Activated B cell treated with CpG ODN at 0.5 μM for 24 hours (primary cell): ENCODE measurements at regions of chr15 and their contacts with region 1.

Region 1: DNA sequence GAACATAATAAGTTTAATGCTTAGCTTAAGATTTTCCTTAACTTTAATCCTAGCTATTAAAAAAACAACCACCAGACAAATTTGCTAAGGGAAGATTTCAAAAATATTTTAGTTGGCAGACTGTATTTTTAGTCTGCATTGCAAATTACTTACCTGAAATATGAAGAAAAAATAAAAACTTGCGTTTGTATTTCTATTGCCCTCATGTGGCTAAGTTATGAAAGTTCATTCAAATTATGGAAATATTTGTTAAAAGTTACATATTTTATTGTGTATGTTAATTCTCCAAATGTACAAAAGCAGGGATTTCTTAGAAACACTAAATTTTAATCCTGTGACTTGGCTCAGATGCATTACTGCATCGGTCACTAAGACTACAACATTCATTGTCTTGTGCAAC is 15.0 kb downstream of the GTF2A2 start:
- DNase-seq: no peak
- ATAC-seq: no peak
- H3K4me3 Mint-ChIP-seq: no peak overlapping the region
- H3K27ac Mint-ChIP-seq: no peak overlapping the region
- H3K4me1 Mint-ChIP-seq: no peaks in the 10 kb centered on the region
- H3K27me3 Mint-ChIP-seq: no peaks in the 10 kb centered on the region
- CTCF ChIP-seq: no peak

Region 2: DNA sequence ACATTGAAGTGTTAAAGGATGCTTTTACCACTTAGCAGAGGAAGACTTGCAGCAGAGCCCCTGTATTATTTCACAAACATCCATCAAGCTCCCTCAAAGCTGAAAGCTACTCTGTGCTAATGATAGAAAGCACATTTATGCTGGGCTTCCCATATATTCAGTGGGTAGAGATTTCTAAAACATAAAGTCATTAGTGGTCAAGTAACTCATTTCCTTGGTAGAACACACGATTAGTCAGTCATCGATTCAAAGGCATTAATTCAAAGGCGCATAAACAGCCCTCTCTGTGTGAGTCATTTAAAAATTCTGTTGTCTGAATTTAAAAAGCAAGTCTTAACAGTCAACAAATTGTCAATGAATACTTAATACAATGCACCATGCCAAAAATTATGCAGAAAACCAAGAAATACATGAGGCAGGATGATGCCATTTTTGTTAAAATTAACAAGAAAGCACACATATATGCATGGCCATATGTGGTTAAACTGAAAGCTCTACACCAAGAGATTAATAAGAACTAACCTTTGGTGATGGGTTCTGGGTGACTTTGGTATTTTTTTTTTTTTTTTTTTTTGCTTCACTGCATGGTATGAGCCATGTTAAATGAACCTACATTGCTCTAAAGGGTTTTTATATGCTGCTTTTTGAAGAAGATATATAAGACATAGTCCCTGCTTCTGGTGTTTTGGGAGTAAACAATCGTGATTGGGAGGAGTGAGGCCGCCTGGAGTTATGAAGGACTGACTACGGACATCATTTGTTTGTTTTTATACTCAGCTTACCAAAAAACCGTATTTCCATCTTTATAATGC is 374.0 kb before region 1 on chr15:
- CTCF ChIA-PET with region 1: no interaction called
- POLR2A ChIA-PET with region 1: no interaction called
- intact Hi-C with region 1: loop called (anchors 5 kb)
- DNase-seq: no peak
- ATAC-seq: no peak
- H3K4me3 Mint-ChIP-seq: no peak overlapping the region
- H3K27ac Mint-ChIP-seq: no peak overlapping the region
- H3K4me1 Mint-ChIP-seq: peaks cover 26% of the 10 kb centered on the region
- H3K27me3 Mint-ChIP-seq: no peaks in the 10 kb centered on the region
- CTCF ChIP-seq: no peak

Region 3: DNA sequence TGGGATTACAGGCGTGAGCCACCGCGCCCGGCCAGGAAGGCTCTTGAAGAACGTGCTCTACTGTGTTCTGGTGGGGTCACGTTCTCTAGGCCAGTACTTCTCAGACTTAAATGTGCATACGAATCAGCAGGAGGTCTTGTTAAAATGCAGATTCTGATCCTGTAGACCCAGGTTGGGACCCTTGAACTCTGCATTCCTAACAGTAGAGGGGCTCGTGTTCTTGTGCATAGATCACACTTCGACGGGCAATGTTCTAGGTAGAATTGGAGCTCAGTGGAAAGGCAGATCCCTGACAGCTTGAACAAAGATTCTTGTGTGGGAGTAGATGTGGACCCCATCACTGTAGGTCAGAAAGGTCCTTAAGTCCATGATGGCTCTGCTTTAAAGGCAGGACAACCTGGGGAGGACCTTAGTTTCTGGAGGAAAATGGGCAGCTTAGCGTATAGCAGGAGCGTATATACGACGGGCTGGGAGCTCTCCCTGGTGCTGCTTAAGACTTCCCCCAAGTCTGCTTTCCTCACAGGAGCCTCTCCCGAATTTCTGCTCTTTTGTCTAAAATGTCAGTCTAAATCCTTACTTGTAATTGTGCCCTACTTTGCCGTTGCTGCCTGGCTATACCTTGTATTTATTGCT is 221.2 kb before region 1 on chr15:
- CTCF ChIA-PET with region 1: no interaction called
- POLR2A ChIA-PET with region 1: no interaction called
- intact Hi-C with region 1: no loop called
- DNase-seq: no peak
- ATAC-seq: no peak
- H3K4me3 Mint-ChIP-seq: no peak overlapping the region
- H3K27ac Mint-ChIP-seq: no peak overlapping the region
- H3K4me1 Mint-ChIP-seq: peaks cover 57% of the 10 kb centered on the region
- H3K27me3 Mint-ChIP-seq: no peaks in the 10 kb centered on the region
- CTCF ChIP-seq: no peak

Region 4: DNA sequence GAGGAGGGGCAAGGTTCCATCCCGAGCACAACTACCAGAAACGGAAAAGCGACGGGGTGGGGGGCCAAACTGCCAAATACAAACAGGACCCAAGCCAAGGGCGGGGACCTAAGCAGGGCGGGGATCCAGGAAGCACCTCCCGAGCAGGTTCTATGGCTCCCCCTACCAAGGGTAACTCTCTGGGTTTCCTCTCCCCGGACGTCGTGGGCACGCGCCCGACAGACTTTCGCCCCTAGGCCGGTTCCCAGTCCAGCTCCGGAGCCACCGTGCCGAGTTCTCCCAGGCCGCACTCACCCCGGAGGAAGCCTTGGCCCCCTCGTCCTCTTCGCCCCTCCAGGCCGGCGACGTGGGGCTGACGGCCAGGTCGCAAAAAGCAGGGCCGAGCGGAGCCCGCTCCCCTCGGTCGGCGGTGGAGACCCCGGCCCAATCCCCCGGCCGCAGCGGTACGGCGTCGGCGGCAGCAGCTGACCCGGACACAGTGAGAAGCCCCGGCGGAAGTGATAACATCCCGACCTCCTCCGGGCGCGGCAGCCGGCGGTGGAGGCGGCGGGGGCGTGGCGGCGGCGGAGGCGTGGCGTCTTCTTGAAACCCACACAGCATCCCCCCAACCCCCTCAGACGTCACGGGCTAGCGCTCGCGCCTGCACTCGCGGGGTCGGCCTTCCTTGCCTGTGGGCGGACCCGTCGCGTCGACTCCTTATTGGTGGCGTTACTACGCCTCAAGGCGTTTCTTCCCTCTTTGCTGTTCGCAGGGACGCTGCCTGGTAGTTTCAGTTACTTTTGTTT is 46.7 kb after region 1 on chr15 and contains the start of gene BNIP2:
- CTCF ChIA-PET with region 1: no interaction called
- POLR2A ChIA-PET with region 1: no interaction called
- intact Hi-C with region 1: no loop called
- DNase-seq: peak; percentile 97
- ATAC-seq: peak; percentile 87
- H3K4me3 Mint-ChIP-seq: peak within 1 kb of the TSS; percentile 92
- H3K27ac Mint-ChIP-seq: peak within 1 kb of the TSS; percentile 96
- H3K4me1 Mint-ChIP-seq: peaks cover 52% of the 10 kb centered on the region
- H3K27me3 Mint-ChIP-seq: no peaks in the 10 kb centered on the region
- CTCF ChIP-seq: no peak
- total RNA-seq, gene BNIP2: 80.1 and 82.9 TPM in 2 replicates

Region 5: DNA sequence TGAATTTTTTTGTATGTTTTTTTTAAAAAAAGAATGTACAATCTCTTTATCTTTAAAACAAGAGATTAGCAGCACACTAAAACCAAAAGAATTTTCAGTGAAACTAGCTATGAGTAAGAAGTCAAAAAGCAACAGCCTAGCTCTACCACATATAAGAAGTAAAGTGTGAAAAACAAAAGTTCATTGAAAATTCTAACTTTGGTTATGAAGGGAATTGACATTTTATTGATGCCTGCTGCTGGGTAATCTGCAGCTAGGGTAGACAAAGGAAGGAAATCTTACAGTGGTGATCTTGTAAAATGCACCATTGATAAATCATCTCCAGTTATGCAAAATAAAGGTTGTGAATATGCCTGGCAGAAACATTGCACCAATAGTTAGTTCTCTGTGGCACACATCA is 323.9 kb after region 1 on chr15:
- CTCF ChIA-PET with region 1: no interaction called
- POLR2A ChIA-PET with region 1: no interaction called
- intact Hi-C with region 1: no loop called
- DNase-seq: no peak
- ATAC-seq: no peak
- H3K4me3 Mint-ChIP-seq: no peak overlapping the region
- H3K27ac Mint-ChIP-seq: no peak overlapping the region
- H3K4me1 Mint-ChIP-seq: no peaks in the 10 kb centered on the region
- H3K27me3 Mint-ChIP-seq: peaks cover 18% of the 10 kb centered on the region
- CTCF ChIP-seq: no peak